ENCODE measurements at regions of chr3 and their contacts with region 1.

Region 1: DNA sequence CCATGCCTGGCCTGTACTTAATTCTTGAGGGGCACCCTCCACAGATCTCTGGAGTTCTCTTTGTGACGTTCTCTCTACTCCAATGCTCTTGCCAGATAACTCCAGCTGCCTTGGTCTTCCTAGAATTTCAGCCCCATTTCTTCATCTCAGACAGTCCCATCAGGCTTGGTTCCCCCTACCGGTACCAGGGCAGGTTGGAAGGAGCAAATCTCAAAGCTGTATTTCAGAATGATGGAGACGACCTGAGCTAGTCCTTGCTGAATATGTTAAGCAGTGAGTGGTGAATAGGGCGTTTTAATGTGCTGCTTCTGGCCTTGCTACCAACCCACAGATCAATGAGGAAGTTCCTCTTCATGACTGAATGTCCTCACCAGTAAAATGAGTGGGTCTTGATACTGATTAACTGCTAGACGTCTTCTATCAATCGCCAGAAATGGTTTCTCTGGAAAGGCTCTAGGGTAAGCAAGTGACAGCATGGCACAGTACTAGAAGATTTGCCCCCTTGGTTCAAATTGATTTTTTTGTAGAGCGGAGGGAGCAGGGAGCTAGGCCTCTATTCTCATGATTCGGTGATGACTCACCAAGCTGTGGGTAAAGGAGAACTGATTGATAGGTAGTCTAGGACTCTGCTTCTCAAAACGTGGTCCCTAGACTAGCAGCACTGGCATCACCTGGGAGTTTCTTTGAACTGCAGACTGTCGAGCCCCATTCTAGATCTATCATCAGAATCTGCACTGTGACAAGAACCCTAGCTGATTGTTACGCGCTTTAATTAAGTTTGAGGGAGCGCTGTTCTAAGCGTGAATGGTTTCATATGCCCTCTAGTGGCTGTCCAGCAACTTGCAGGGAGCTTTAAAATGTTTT is 67.8 kb downstream of the UBP1 start:
- DNase-seq: peak; percentile 59
- ATAC-seq: peak; percentile 93
- H3K4me3 Mint-ChIP-seq: no peak overlapping the region
- H3K27ac Mint-ChIP-seq: no peak overlapping the region
- H3K4me1 Mint-ChIP-seq: peaks cover 2% of the 10 kb centered on the region
- H3K27me3 Mint-ChIP-seq: peaks cover 12% of the 10 kb centered on the region
- CTCF ChIP-seq: peak; percentile 98

Region 2: DNA sequence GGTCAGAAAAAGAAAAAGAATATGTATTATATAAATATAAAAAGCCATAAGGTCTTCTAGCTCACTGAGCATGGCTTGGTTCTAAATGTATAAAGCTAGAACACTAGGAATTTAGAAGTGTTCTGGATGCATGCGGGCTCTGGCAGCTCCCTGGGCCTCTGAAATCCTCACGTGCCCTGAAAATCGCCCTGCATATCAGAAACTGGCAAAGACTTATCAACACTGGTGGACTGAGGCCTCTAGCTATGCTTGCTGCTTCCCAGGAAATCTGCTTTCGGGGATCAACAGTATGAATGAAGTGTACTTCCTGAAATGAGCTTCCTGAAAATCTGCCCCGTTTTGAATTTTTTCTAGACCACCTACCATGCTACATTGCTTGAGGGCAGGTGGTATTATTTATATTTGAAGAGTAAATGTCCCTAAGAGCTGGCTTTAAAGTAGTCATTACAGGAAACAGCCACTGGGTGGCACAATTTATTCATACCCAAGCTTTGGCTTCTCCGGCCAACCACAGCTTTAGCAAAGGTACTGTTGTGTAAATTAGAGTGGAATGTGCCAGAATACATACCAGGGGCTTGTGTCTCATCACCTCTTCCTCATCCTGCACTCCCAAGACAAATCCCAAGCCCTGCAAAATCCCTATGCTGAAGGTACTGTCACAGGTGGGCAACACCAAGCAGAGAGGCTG is 241.0 kb before region 1 on chr3:
- CTCF ChIA-PET with region 1: interaction called, 78 read pairs
- POLR2A ChIA-PET with region 1: no interaction called
- intact Hi-C with region 1: loop called (anchors 5 kb)
- DNase-seq: peak; percentile 50
- ATAC-seq: peak; percentile 80
- H3K4me3 Mint-ChIP-seq: no peak overlapping the region
- H3K27ac Mint-ChIP-seq: no peak overlapping the region
- H3K4me1 Mint-ChIP-seq: no peaks in the 10 kb centered on the region
- H3K27me3 Mint-ChIP-seq: no peaks in the 10 kb centered on the region
- CTCF ChIP-seq: peak; percentile 84

Region 3: DNA sequence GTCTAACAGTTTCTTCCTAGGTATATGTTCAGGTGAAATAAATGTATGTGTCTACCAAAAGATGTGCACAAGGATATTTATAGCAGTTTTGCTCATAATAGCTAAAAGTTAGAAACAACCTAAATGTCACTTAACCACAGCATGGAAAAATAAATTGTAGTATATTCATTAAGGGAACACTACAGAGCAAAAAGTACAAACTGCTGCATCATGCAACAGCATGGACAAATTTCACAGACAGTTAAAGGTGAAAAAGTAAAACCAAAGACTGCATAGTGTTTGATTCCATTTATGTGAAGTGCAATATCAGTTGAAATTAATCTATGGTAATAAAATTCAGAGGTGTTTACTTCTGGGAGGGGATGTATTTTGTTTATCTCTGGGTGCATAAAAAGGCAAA is 32.7 kb before region 1 on chr3:
- CTCF ChIA-PET with region 1: no interaction called
- POLR2A ChIA-PET with region 1: no interaction called
- intact Hi-C with region 1: no loop called
- DNase-seq: no peak
- ATAC-seq: no peak
- H3K4me3 Mint-ChIP-seq: no peak overlapping the region
- H3K27ac Mint-ChIP-seq: no peak overlapping the region
- H3K4me1 Mint-ChIP-seq: no peaks in the 10 kb centered on the region
- H3K27me3 Mint-ChIP-seq: no peaks in the 10 kb centered on the region
- CTCF ChIP-seq: no peak

Region 4: DNA sequence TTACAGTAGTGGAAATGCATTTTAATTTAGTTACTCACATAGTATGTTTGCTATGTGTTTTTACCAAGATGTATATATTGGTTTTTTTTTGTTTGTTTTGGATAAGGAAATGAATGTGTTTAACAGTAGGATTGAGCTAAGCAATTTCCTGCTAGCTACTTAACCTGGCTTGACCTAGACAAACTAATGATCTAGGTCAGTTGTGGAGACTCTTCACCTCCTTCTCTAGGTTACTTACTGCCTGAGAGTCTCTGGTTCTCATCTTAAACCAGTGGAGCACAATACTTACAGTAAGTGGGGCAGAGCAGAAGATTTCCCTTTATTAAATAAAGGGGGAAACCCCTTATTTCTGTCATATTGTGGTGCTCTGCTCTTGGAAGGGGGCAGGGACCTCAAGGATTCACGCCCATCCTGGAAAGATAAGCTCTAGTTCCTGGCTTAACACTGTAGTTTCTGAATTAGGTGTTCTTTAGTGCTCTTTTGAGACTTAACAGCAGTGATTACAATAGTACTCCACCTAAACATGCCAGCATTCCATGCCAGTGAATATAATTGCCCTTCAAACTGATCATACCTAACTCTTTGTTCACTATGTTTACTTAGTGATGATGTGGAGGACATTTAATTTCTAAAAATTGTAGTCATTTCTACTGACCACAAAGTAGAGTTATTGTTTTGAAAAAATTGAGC is 12.2 kb before region 1 on chr3:
- CTCF ChIA-PET with region 1: interaction called, 28 read pairs
- POLR2A ChIA-PET with region 1: no interaction called
- intact Hi-C with region 1: no loop called
- DNase-seq: no peak
- ATAC-seq: no peak
- H3K4me3 Mint-ChIP-seq: no peak overlapping the region
- H3K27ac Mint-ChIP-seq: no peak overlapping the region
- H3K4me1 Mint-ChIP-seq: no peaks in the 10 kb centered on the region
- H3K27me3 Mint-ChIP-seq: peaks cover 7% of the 10 kb centered on the region
- CTCF ChIP-seq: no peak

Region 5: DNA sequence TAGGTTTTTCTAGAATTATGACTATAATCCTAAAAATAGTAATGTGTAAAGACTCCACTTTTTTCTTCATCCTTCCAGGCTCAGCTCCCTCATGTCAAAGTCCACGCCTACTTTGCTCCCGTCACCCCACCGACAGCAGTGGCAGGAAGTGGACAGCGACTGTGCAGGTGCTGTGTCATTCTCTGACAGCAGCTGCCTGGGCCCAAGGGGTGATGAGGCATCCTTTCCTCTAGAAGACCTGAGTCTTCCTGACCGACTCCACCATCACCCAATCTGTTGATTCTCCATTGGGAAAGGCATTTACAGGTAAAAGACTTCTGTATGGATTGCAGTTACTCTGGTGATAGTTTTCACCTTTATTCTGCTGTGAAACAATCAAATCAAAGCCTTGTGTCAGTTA is 13.0 kb after region 1 on chr3:
- CTCF ChIA-PET with region 1: interaction called, 55 read pairs
- POLR2A ChIA-PET with region 1: interaction called, 3 read pairs
- intact Hi-C with region 1: no loop called
- DNase-seq: peak; percentile 77
- ATAC-seq: peak; percentile 92
- H3K4me3 Mint-ChIP-seq: no peak overlapping the region
- H3K27ac Mint-ChIP-seq: peak overlapping the region; percentile 69
- H3K4me1 Mint-ChIP-seq: peaks cover 16% of the 10 kb centered on the region
- H3K27me3 Mint-ChIP-seq: no peaks in the 10 kb centered on the region
- CTCF ChIP-seq: no peak

Region 6: DNA sequence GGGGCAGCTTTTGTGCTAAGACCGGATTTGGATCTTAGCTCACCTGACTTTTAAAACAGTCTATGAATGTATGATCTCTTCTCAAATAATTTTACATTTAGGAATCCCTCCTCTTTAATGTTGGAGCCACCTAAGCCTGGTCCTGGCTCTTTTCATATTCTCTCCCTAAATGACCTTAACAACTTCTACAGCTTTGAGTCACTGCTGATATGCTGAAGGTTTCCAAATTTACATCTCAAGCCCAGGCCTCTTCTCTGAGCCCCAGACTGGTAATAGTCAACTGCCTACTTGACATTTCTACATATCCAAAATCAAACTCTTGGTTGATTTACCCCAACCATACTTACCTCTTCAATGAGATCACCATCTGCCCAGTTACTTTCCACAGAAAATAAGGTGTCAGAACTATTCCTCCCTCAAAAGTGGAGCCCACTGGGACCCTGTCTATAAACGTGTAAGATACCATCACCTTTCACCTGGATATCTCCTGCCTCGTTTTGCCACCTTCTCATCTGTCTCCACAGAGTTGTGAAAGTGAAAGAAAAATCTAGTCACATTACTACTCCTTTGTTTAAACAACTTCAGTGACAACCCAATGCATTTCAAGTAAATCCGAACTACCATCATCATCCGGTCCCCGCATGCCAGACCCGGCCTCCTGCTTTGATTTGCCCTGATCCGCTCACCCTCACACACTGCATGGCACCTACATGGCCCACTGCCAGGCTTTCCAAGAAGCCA is 19.0 kb after region 1 on chr3:
- CTCF ChIA-PET with region 1: interaction called, 55 read pairs
- POLR2A ChIA-PET with region 1: interaction called, 3 read pairs
- intact Hi-C with region 1: no loop called
- DNase-seq: no peak
- ATAC-seq: peak; percentile 34
- H3K4me3 Mint-ChIP-seq: no peak overlapping the region
- H3K27ac Mint-ChIP-seq: peak overlapping the region; percentile 62
- H3K4me1 Mint-ChIP-seq: peaks cover 12% of the 10 kb centered on the region
- H3K27me3 Mint-ChIP-seq: no peaks in the 10 kb centered on the region
- CTCF ChIP-seq: no peak

Region 7: DNA sequence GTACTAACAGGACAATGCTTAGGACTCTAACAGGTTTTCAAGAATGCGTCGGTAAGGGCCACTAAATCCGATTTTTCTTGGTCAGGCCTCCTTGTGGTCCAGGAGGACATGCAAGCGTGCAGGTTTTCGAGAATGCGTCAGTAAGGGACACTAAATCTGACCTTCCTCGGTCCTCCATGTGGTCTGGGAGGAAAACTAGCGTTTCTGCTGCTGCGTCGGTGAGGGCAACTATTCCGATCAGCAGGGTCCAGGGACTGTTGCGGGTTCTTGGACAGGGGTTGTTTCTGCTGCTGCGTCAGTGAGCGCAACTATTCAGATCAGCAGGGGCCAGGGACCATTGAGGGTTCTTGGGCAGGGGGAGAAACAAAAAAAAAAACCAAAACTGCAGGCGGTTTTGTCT is 75.5 kb after region 1 on chr3:
- CTCF ChIA-PET with region 1: no interaction called
- POLR2A ChIA-PET with region 1: no interaction called
- intact Hi-C with region 1: no loop called
- DNase-seq: no peak
- ATAC-seq: no peak
- H3K4me3 Mint-ChIP-seq: no peak overlapping the region
- H3K27ac Mint-ChIP-seq: no peak overlapping the region
- H3K4me1 Mint-ChIP-seq: peaks cover 14% of the 10 kb centered on the region
- H3K27me3 Mint-ChIP-seq: no peaks in the 10 kb centered on the region
- CTCF ChIP-seq: no peak

Measured in activated CD8-positive, alpha-beta T cell treated with anti-CD3 and anti-CD28 coated beads for 36 hours (primary cell).